HCT116 (cell line): ENCODE measurements at regions of chr1 and their contacts with region 1.

Region 1: GRCh38 chr1:212782422-212783154 is 9.0 kb downstream of the NSL1 start:
- DNase-seq: no peak
- ATAC-seq: peak; percentile 68; the same call in 1 of the 2 replicates
- H3K4me3 ChIP-seq: no peak overlapping the region
- H3K27ac ChIP-seq: no peak overlapping the region
- H3K4me1 ChIP-seq: no peaks in the 10 kb centered on the region
- H3K27me3 ChIP-seq: no peaks in the 10 kb centered on the region
- CTCF ChIP-seq: peak; percentile 50 to 70 (median 64); a peak in 5 of 6 replicates
- POLR2A ChIP-seq: no peak
- RAD21 ChIP-seq: peak; percentile 75

Region 2: GRCh38 chr1:211680752-211681327 is 1101.7 kb before region 1 on chr1:
- CTCF ChIA-PET with region 1: no interaction called
- POLR2A ChIA-PET with region 1: no interaction called
- RAD21 ChIA-PET with region 1: no interaction called
- intact Hi-C with region 1: loop called (anchors 5 kb)
- DNase-seq: peak; percentile 85
- ATAC-seq: peak; percentile 88
- H3K4me3 ChIP-seq: no peak overlapping the region
- H3K27ac ChIP-seq: no peak overlapping the region
- H3K4me1 ChIP-seq: peaks cover 0 to 13% of the 10 kb centered on the region in 2 experiments; a peak in 3 of 4 replicates
- H3K27me3 ChIP-seq: no peaks in the 10 kb centered on the region
- CTCF ChIP-seq: peak; percentile 64 to 94 (median 75)
- POLR2A ChIP-seq: no peak
- RAD21 ChIP-seq: peak; percentile 97

Region 3: DNA sequence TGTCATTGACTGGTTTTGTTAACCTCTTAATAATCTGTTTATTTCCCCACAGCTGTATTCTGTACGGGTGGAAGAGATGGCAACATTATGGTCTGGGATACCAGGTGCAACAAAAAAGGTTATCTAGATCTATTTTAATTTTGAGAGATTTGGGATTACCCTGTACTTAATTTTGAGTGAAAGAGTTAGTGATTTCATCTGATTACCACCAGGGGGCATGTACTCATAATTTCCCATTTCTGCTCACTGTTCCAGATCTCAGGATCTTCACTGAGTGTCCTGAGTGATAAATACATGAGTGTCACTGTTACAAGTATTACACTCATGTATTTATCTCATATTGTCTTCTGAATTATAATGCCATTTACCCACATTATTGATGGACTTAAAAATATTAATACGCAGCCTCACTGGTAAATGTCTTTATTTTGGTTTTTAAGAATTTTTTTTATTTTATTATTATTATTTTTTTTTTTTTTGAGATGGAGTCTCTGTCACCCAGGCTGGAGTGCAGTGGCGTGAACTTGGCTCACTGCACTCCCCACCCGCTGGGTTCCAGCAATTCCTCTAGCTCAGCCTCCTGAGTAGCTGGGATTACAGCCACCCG is 719.7 kb before region 1 on chr1:
- CTCF ChIA-PET with region 1: no interaction called
- POLR2A ChIA-PET with region 1: no interaction called
- RAD21 ChIA-PET with region 1: no interaction called
- intact Hi-C with region 1: loop called (anchors 10 kb)
- DNase-seq: peak; percentile 22
- ATAC-seq: peak; percentile 83
- H3K4me3 ChIP-seq: no peak overlapping the region
- H3K27ac ChIP-seq: no peak overlapping the region
- H3K4me1 ChIP-seq: no peaks in the 10 kb centered on the region
- H3K27me3 ChIP-seq: no peaks in the 10 kb centered on the region
- CTCF ChIP-seq: peak; percentile 58 to 66 (median 60); a peak in 5 of 6 replicates
- POLR2A ChIP-seq: no peak
- RAD21 ChIP-seq: peak; percentile 65

Region 4: GRCh38 chr1:212229654-212230053 is 552.9 kb before region 1 on chr1:
- CTCF ChIA-PET with region 1: no interaction called
- POLR2A ChIA-PET with region 1: no interaction called
- RAD21 ChIA-PET with region 1: no interaction called
- intact Hi-C with region 1: no loop called
- DNase-seq: no peak
- ATAC-seq: no peak
- H3K4me3 ChIP-seq: no peak overlapping the region
- H3K27ac ChIP-seq: no peak overlapping the region
- H3K4me1 ChIP-seq: peaks cover 6 to 12% of the 10 kb centered on the region in 2 experiments
- H3K27me3 ChIP-seq: no peaks in the 10 kb centered on the region
- CTCF ChIP-seq: no peak
- POLR2A ChIP-seq: no peak
- RAD21 ChIP-seq: no peak

Region 5: GRCh38 chr1:212477014-212477679 is 305.4 kb before region 1 on chr1:
- CTCF ChIA-PET with region 1: interaction called, 5 read pairs
- POLR2A ChIA-PET with region 1: no interaction called
- RAD21 ChIA-PET with region 1: no interaction called
- intact Hi-C with region 1: loop called (anchors 1 kb)
- DNase-seq: peak; percentile 81
- ATAC-seq: peak; percentile 98
- H3K4me3 ChIP-seq: no peak overlapping the region
- H3K27ac ChIP-seq: no peak overlapping the region
- H3K4me1 ChIP-seq: peaks cover 0 to 17% of the 10 kb centered on the region in 2 experiments; a peak in 2 of 4 replicates
- H3K27me3 ChIP-seq: no peaks in the 10 kb centered on the region
- CTCF ChIP-seq: peak; percentile 89 to 96 (median 91)
- POLR2A ChIP-seq: no peak
- RAD21 ChIP-seq: peak; percentile 98

Region 6: DNA sequence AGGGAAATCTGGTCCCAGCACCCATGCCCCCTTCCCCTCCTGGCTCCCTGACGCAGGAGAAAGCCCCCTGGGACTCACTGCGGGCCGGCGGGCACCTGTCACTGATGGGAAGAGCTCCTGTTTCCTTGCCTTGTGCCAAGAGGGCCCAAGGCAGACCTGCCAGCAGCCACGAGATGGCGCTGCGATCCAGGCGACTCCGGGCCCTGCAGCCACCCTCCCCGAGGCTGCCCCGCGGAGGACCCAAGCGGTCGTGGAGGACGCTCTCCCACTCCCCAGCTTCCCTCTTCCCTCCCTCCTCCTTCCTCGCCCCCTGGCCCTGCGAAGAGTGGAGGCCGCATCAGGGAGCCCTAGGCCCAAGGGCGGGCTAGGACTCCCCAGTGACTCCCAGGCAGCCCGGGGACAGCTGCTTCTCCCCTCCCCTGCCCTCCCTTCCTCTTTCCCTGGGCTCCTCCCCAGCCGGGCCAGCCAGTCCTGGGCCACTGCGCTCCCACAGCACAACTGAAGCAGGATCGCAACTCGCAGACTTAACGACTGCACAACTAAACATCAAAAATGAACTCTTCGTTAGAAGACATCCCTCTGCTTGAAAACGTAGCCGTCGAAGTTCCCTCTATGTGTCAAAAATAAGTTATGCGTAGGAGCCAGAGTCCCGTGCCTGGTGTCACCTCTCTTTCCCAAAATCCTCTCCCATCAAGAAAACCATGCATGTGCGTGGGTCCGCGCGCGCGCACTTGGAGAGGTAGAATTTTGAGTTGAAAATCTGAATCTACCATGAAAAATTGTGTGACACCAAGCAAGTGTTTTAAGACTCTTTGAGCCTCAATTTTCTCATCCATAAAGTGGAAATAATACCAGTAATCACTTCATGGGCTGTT is 117.1 kb before region 1 on chr1:
- CTCF ChIA-PET with region 1: interaction called, 7 read pairs
- POLR2A ChIA-PET with region 1: no interaction called
- RAD21 ChIA-PET with region 1: no interaction called
- intact Hi-C with region 1: loop called (anchors 1 kb)
- DNase-seq: peak; percentile 68
- ATAC-seq: peak; percentile 98
- H3K4me3 ChIP-seq: peak overlapping the region; percentile 53 to 64
- H3K27ac ChIP-seq: no peak overlapping the region; the same call in 1 of the 2 replicates
- H3K4me1 ChIP-seq: peaks cover 7 to 20% of the 10 kb centered on the region in 2 experiments; a peak in 3 of 4 replicates
- H3K27me3 ChIP-seq: no peaks in the 10 kb centered on the region
- CTCF ChIP-seq: peak; percentile 84 to 96 (median 84)
- POLR2A ChIP-seq: no peak
- RAD21 ChIP-seq: peak; percentile 95

Region 7: GRCh38 chr1:212743901-212744475 is 38.6 kb before region 1 on chr1:
- CTCF ChIA-PET with region 1: no interaction called
- POLR2A ChIA-PET with region 1: no interaction called
- RAD21 ChIA-PET with region 1: no interaction called
- intact Hi-C with region 1: no loop called
- DNase-seq: no peak
- ATAC-seq: no peak
- H3K4me3 ChIP-seq: no peak overlapping the region
- H3K27ac ChIP-seq: no peak overlapping the region
- H3K4me1 ChIP-seq: no peaks in the 10 kb centered on the region
- H3K27me3 ChIP-seq: no peaks in the 10 kb centered on the region
- CTCF ChIP-seq: no peak
- POLR2A ChIP-seq: no peak
- RAD21 ChIP-seq: no peak

Region 8: GRCh38 chr1:212794561-212795014 is 12.0 kb after region 1 on chr1:
- CTCF ChIA-PET with region 1: no interaction called
- POLR2A ChIA-PET with region 1: no interaction called
- RAD21 ChIA-PET with region 1: no interaction called
- intact Hi-C with region 1: no loop called
- DNase-seq: no peak
- ATAC-seq: no peak
- H3K4me3 ChIP-seq: no peak overlapping the region
- H3K27ac ChIP-seq: no peak overlapping the region
- H3K4me1 ChIP-seq: peaks cover 10 to 21% of the 10 kb centered on the region in 2 experiments
- H3K27me3 ChIP-seq: no peaks in the 10 kb centered on the region
- CTCF ChIP-seq: no peak
- POLR2A ChIP-seq: no peak
- RAD21 ChIP-seq: no peak